Sigmoid colon (tissue), 7 donors: ENCODE measurements at regions of chr16 and their contacts with region 1.

Region 1: DNA sequence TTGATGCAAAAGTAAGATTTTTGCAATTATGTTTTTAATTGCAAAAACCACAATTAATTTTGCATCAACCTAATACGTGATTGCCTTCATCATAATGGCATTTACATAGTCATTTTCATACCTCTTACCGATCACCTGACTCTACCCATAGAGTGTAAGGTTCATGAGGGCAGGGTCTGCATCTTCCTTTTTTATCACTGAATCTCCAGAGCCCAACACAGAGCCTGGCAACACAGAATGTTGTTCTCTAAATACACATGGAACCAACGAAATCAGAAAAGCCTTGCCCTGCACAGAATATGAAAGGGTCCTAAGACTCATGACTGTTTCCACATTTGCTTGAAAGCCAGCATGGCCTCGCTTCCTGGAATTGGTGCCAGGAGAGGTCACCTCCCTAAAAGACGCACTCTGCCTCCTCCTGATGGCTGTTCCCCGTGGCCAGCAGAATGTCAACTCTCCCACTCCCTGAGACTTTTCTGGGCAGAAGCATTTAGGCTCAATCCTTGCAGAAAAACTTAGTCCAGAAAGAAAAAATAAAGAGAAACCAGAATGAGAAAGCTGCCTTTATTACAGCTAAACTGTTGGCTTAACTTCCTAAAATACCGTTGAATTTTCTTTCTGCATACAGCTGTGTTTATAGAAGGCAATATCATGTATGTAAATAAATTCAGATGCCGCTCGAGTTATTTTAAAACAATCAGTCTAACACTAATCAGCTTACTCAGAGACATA is 327.8 kb upstream of the MAF start:
- DNase-seq: no peak
- H3K4me3 ChIP-seq: no peak overlapping the region
- H3K27ac ChIP-seq: peak overlapping the region in 1 of 4 donors; percentile 69
- H3K4me1 ChIP-seq: peaks cover 0 to 31% (median 23%) of the 10 kb centered on the region in 4 donors
- H3K27me3 ChIP-seq: no peaks in the 10 kb centered on the region
- CTCF ChIP-seq: no peak
- EP300 ChIP-seq: no peak
- POLR2A ChIP-seq: no peak

Region 2: DNA sequence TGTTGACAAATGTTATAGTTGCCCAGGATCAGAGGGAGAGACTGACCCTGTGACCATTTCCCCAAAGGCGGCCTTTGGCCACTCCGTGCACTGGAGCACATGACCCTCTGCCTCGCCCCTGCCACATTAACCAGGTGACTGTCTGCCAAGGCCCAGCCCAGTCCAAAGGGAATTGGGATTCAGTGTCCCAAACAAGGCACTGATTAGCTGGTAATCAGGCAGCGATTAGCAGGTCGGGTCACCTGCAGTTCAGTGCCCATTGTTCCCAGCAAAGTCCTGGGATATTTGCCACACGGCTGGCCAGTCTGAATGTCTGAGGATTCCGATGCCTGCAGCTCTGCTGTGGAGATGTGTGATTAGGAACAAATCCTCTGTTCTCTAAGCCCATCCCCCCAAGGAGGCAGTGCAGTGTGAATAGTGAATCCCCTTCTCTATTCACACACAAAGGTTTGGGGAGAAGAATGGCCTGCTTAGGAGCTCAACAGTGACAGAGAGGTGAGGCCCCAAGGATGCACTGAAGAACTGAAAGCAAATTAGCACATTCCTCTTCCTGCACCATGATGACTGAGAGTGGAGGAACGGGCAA is 204.6 kb before region 1 on chr16:
- intact Hi-C with region 1: no loop called
- DNase-seq: no peak
- H3K4me3 ChIP-seq: no peak overlapping the region
- H3K27ac ChIP-seq: no peak overlapping the region
- H3K4me1 ChIP-seq: peaks cover 0 to 17% (median 10%) of the 10 kb centered on the region in 4 donors
- H3K27me3 ChIP-seq: no peaks in the 10 kb centered on the region
- CTCF ChIP-seq: no peak
- EP300 ChIP-seq: no peak
- POLR2A ChIP-seq: no peak

Region 3: GRCh38 chr16:79849119-79849518 is 79.2 kb before region 1 on chr16:
- intact Hi-C with region 1: loop called (anchors 2 kb)
- DNase-seq: peak; percentile 68
- H3K4me3 ChIP-seq: no peak overlapping the region
- H3K27ac ChIP-seq: peak overlapping the region in 3 of 4 donors; percentile 14 to 33 (median 24)
- H3K4me1 ChIP-seq: peaks cover 0 to 37% (median 35%) of the 10 kb centered on the region in 4 donors
- H3K27me3 ChIP-seq: no peaks in the 10 kb centered on the region
- CTCF ChIP-seq: no peak
- EP300 ChIP-seq: no peak
- POLR2A ChIP-seq: no peak

Region 4: DNA sequence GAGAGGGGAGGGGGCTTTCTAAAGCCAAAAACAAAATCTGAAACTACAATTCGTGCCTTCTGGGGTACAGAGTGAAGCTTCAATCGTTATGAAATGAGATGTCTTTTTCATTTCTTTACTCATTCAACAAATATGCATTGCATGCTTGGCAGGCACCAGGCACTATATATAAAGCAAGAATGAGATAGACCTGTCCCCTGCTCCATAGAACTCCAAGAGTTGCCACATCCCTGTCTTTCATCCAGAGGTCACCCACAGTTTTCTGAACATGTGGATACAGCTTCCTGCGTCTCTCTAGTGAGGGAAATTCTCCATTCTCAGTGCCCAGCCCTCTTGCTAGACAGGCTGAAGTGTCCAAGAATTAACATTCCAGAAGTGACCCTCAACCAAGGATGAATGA is 15.4 kb after region 1 on chr16:
- intact Hi-C with region 1: no loop called
- DNase-seq: no peak
- H3K4me3 ChIP-seq: no peak overlapping the region
- H3K27ac ChIP-seq: no peak overlapping the region
- H3K4me1 ChIP-seq: peaks cover 0 to 5% (median 0%) of the 10 kb centered on the region in 4 donors
- H3K27me3 ChIP-seq: no peaks in the 10 kb centered on the region
- CTCF ChIP-seq: no peak
- EP300 ChIP-seq: no peak
- POLR2A ChIP-seq: no peak

Region 5: GRCh38 chr16:80014241-80014939 is 86.1 kb after region 1 on chr16:
- intact Hi-C with region 1: no loop called
- DNase-seq: no peak
- H3K4me3 ChIP-seq: no peak overlapping the region
- H3K27ac ChIP-seq: no peak overlapping the region
- H3K4me1 ChIP-seq: no peaks in the 10 kb centered on the region
- H3K27me3 ChIP-seq: no peaks in the 10 kb centered on the region
- CTCF ChIP-seq: no peak
- EP300 ChIP-seq: no peak
- POLR2A ChIP-seq: no peak

Region 6: GRCh38 chr16:80058214-80058613 is 129.9 kb after region 1 on chr16:
- intact Hi-C with region 1: loop called (anchors 2 kb)
- DNase-seq: peak; percentile 89
- H3K4me3 ChIP-seq: no peak overlapping the region
- H3K27ac ChIP-seq: peak overlapping the region in 3 of 4 donors; percentile 46 to 61 (median 53)
- H3K4me1 ChIP-seq: peaks cover 0 to 23% (median 18%) of the 10 kb centered on the region in 4 donors
- H3K27me3 ChIP-seq: no peaks in the 10 kb centered on the region
- CTCF ChIP-seq: no peak
- EP300 ChIP-seq: no peak
- POLR2A ChIP-seq: no peak